GM10248 (cell line): ENCODE measurements at regions of chr13 and their contacts with region 1.

Region 1: DNA sequence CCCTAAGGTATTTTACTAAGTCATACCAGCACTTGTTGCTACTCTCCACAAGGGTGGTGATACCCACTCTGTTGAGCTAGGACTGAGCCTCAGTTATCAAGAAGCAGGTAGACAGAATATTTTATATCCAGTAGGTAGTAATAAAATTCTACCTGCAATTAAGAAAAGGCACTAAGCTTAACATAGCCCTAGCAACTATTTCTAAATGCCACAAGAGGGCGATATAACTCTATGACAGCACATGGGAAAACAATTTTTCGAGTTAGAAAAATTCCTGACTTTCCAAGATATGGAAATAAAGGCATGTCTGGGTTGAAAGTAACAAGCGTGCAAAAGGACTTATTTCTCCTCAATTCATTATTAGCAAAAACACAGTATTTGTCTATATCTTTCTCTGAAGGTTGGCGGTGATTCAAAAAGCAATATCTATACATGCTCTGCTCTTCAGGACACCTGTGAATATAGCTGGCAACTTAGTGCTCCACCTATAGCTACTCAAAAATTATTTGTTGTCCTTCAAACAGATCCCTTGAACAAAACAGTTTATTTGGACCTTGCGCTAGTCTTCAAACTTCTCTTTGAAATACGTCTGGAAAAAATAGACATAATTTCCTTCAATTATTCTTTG is 14.7 kb downstream of the CCDC169 start:
- DNase-seq: no peak
- CTCF ChIP-seq: peak; percentile 47

Region 2: DNA sequence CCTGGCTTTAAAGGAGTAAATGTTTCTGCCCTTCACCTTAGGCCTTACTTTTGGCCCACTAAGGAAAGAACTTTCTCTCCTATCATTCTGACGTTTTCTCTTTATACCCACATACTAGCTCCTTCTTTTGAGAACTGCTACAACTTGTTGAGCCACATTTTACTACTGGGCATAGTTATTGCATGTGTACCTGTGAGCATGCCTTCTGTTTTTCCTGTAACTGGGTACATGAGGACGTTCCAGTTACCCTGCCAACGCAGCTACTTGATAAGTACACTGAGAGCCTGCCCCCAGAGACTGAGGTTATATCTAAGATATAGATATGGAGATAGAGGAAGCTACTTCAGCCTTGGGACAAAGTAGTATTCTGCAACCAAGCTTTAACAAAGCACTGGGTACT is 11.2 kb after region 1 on chr13:
- CTCF ChIA-PET with region 1: interaction called, 28 read pairs
- POLR2A ChIA-PET with region 1: no interaction called
- DNase-seq: no peak
- CTCF ChIP-seq: no peak

Region 3: GRCh38 chr13:36872621-36873020 is 589.7 kb after region 1 on chr13:
- CTCF ChIA-PET with region 1: no interaction called
- POLR2A ChIA-PET with region 1: no interaction called
- DNase-seq: no peak
- CTCF ChIP-seq: no peak

Region 4: GRCh38 chr13:36882829-36883390 is 600.0 kb after region 1 on chr13:
- CTCF ChIA-PET with region 1: no interaction called
- POLR2A ChIA-PET with region 1: no interaction called
- DNase-seq: no peak
- CTCF ChIP-seq: no peak